PC-3 (cell line): ENCODE measurements at regions of chrX and their contacts with region 1.

Region 1: GRCh38 chrX:52923781-52924241 is 26.7 kb downstream of the FAM156B start:
- DNase-seq: peak; percentile 61
- ATAC-seq: peak; percentile 55
- H3K4me3 ChIP-seq: peak overlapping the region; percentile 17; the same call in 1 of the 2 replicates
- H3K27ac ChIP-seq: peak overlapping the region; percentile 61
- H3K4me1 ChIP-seq: peaks cover 13% of the 10 kb centered on the region
- H3K27me3 ChIP-seq: no peaks in the 10 kb centered on the region
- CTCF ChIP-seq: no peak

Region 2: DNA sequence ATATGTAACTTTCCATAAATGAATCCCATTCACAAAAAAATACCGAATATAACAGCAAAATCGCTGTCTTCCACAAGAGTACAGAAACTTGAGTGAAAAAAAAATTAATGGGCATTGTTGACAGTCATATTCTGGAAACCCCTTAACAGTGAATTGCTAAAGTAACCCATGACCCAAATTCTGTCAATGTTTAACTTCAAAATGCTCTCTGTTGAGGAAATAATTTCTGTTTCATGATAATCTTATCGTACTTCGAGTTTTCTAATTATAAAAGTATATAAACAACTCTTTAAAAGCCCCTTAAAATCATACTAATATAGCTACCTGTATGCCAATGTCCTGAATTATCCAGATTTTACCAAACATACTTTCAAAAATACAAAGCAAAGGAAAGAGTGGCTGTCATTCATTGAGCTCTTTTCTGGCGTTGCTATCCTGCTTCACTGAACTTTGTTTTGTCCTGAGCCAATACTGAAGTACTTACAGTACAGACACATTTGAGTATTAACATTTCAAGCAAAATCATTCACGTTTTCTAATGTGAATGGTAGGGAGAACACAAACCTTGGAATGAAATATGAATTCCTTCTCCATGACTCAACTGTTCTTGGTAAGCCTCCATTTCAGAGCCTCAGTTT is 58.3 kb before region 1 on chrX:
- CTCF ChIA-PET with region 1: no interaction called
- POLR2A ChIA-PET with region 1: no interaction called
- intact Hi-C with region 1: no loop called
- DNase-seq: no peak
- ATAC-seq: no peak
- H3K4me3 ChIP-seq: no peak overlapping the region
- H3K27ac ChIP-seq: no peak overlapping the region
- H3K4me1 ChIP-seq: no peaks in the 10 kb centered on the region
- H3K27me3 ChIP-seq: peaks cover 41% of the 10 kb centered on the region; the same call in 1 of the 2 replicates
- CTCF ChIP-seq: no peak

Region 3: GRCh38 chrX:52934707-52935469 is 11.1 kb after region 1 on chrX:
- CTCF ChIA-PET with region 1: interaction called, 5 read pairs
- POLR2A ChIA-PET with region 1: interaction called, 34 read pairs
- intact Hi-C with region 1: no loop called
- DNase-seq: peak; percentile 92
- ATAC-seq: peak; percentile 94
- H3K4me3 ChIP-seq: peak overlapping the region; percentile 87
- H3K27ac ChIP-seq: peak overlapping the region; percentile 92
- H3K4me1 ChIP-seq: peaks cover 11% of the 10 kb centered on the region
- H3K27me3 ChIP-seq: no peaks in the 10 kb centered on the region
- CTCF ChIP-seq: peak; percentile 86

Region 4: DNA sequence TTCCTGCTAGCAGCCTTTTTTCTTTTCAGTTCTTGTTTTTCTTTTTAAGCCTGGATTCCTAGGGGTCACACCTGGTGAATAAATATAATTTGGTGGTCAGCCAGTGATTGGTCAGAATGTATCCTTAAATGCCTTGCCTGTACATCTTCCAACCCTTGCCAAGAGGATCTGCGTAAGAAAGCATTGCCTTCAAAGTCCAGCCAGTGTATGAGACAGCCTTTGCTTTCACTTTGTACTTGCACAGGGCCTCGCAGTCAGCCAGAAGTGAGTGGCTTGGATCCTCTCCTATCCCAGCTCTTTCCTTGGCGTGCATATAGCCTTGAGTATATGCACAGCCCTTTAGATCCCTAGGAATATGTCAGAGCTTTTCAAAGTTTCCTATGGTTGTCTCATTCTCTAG is 192.3 kb after region 1 on chrX:
- CTCF ChIA-PET with region 1: no interaction called
- POLR2A ChIA-PET with region 1: no interaction called
- intact Hi-C with region 1: no loop called
- DNase-seq: no peak
- ATAC-seq: no peak
- H3K4me3 ChIP-seq: no peak overlapping the region
- H3K27ac ChIP-seq: no peak overlapping the region
- H3K4me1 ChIP-seq: no peaks in the 10 kb centered on the region
- H3K27me3 ChIP-seq: no peaks in the 10 kb centered on the region
- CTCF ChIP-seq: no peak

Region 5: DNA sequence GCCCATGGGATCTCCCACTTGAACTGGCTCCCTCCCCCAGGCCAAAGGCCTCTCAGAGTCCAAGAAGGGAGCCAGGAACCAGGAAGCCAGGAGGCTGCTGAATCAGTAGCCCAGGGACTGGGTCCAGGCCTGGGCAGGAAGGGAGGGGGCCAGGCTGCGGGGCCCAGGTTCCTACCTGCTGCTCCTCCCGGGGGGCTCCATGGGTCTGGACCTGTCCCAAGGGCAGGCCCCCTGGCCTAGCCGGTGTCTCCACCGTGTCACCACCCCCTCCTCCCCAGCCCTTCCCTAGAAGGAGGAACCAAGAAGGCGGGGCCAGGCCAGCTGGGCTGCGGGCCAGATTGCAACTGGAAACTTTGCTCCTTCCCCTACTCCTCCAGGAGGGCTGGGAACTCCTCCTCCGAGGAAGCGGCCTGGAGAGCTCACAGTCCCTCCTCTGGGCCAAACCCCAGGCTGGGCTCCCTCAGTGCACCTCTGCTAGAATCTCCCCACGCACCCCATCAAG is 357.6 kb after region 1 on chrX and contains the start of gene IQSEC2:
- CTCF ChIA-PET with region 1: no interaction called
- POLR2A ChIA-PET with region 1: no interaction called
- intact Hi-C with region 1: no loop called
- DNase-seq: peak; percentile 89
- ATAC-seq: peak; percentile 80
- H3K4me3 ChIP-seq: peak within 1 kb of the TSS; percentile 62
- H3K27ac ChIP-seq: peak within 1 kb of the TSS; percentile 95
- H3K4me1 ChIP-seq: peaks cover 42% of the 10 kb centered on the region
- H3K27me3 ChIP-seq: no peaks in the 10 kb centered on the region
- CTCF ChIP-seq: no peak
- total RNA-seq, gene IQSEC2: 8.5 and 19.3 TPM in 2 replicates